Cardiac septum (tissue), 1 donor: ENCODE measurements at regions of chr12 and their contacts with region 1.

Region 1: DNA sequence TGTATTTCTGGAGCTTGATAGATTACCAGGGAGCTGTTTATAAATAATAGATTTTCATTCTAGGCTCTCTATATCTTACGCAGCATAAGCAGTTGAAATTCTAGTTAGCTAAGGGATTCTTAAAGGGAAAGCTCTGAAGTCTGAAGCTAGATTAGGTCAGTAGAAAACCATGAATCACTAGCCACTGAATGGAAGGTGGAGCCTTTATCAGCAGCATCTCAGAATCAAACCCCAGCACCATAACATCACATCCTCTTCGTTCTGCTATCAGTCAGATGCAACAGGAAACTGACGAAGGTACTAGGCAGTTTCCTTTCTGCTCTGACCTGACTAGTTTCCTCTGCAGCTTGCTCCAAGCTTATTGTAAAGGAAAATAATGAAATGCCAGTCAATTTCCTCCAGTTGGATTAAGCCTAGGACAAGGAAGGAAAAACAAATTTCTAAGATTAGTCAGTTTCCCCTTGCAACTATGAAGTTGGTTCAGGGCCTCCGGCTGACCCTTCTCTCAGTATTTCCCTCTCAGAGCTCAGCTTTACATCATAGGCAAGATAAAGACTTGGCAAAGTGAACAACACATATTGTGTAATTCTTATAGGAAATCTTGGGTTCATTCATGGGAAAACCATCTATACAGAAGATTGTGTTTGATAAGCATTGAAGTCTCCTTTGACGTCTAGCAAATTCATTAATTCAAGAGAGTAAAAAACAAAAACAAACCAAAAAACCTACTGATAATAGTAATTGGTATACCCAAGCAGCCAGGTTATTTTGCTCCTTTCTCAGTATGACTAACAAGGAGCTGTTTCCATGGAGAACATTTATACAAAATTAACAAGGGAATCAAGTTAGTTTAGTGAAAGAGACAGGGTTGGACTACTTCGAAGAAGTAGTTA is 43.4 kb upstream of the CFAP54 start:
- DNase-seq: no peak

Region 2: GRCh38 chr12:96015672-96016071 is 430.3 kb before region 1 on chr12:
- intact Hi-C with region 1: no loop called
- DNase-seq: no peak

Region 3: GRCh38 chr12:96263449-96263902 is 182.5 kb before region 1 on chr12:
- intact Hi-C with region 1: no loop called
- DNase-seq: no peak

Region 4: DNA sequence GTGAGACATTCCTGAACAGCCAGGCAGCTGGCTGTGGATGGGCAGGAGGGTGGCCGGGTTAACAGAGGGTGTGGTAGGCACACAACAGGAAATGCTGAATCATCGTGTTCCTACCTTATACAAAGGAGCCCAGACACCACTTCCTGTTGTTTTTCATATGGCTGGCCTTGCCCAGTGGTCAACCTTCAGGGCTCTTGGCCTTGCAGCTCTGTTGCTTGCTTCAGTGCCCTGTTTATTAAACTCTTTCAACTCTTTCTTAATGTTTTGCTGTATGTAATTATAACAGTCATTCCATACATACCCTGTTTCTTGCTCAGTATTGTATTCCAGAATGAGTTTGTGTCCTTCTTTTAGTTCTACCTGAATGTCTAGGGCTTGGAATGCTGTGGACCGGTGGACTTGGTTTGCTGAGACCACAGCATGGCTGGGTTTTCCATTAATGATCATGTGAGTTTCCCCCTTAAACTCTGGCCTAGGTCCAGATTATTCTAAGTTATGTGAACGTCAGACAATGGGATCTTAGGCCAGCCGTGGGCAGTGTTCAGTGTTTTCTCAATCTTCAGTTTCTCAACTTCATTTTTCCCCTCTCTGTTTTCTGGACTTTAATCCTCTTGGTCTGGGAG is 55.3 kb after region 1 on chr12:
- intact Hi-C with region 1: loop called (anchors 5 kb)
- DNase-seq: peak; percentile 86

Region 5: DNA sequence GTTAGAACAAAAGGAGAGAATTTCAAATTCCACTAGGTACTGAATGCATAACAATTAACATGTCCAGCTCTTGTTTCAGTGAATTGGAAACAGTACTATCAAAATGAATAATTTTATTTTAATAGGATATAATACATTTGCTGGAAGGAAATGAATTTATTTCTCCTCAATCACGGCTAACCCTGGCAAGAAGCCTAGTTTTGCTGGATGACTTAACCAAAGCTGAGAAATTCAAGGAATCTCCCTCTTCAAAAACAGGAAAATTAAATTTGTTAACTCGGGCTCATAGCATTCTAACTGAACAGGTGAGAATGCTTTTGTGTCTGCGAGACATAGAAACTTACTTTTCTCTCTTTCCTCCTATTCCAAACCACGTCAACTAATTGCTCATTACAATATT is 297.7 kb after region 1 on chr12:
- intact Hi-C with region 1: no loop called
- DNase-seq: no peak